Activated CD4-positive, alpha-beta T cell treated with anti-CD3 and anti-CD28 coated beads for 36 hours (primary cell): ENCODE measurements at regions of chr10 and their contacts with region 1.

Region 1: DNA sequence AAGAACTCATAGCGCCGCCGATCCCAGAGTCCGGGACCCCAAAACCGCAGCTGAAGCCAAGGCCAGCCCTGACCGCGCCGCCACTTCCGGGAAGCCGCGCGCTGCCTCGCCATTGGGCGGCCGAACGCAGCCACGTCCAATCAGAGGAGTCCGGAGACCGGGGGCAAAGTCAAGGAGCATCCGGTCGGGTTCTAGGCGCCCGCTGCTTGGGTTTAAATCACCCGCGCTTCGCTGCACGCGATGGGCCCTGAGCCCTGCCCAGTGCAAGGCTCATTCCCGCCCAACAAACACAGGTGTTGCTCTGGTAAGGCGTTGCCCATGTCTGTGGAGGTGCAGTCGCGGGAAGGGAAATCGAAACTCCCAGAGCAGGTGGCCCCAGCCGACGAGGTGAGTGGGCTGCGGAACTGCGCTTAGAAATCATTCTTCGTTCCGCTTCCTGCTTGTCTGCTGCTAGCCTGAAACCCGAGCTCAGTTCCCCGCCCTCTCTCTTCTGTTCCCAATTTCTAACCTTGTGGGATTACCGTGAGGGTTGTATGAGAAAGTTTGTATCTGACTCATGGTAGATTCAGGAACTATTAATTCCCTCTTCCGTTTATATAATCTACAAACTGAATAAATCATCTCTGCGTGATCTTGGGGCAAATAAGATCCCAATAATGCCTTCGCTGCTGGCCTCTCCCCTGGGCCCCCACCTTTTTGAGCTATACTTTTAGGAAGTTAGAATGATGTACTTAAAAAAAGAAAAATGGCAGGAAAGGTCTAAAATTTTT is at the start of gene DCLRE1C:
- DNase-seq: peak; percentile 94
- ATAC-seq: peak; percentile 94
- H3K4me3 Mint-ChIP-seq: peak within 1 kb of the TSS; percentile 90
- H3K27ac Mint-ChIP-seq: peak within 1 kb of the TSS; percentile 97
- H3K4me1 Mint-ChIP-seq: peaks cover 52% of the 10 kb centered on the region
- H3K27me3 Mint-ChIP-seq: no peaks in the 10 kb centered on the region
- total RNA-seq, gene DCLRE1C: 17.9 to 30.9 TPM

Region 2: DNA sequence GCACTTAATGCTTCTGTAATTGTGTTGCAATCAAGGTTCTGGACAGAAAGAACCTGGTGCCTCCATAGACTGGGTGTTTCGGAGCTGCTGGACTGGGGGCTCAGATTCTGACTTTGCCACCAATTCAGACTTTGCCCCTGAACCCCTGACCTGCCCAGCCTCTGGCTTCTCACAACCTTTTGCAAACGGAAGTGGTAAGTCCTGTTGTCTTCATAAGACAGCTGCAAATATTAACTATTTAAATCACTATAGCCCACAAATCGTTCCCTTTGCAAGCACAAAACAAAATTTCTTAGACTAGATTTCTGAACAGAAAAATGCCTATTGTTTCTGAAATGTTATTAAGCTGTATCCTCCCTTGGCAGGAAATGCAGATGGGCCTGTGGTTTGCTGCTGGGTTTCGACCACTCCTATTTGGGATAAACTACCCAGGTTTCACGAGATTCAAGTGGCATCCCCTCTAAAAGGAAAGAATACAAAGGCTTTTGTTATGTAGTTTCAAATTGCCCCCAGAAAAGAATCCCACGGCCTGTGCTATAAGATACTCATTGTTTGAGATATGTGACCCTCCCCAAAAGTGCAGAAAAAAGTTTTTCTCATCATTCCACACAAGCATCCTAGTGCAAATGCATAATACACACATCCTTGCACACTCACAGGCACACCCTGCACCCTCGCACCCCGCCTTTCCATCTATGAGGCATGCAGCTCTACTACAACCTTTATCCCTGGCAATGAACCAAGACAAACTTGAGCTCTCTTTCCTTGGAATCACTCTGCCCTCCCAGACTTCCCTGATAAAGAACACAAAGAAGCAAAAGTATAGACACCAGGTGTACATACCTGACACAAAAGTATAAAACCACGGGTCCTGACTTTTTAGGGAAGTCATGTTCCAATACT is 1158.3 kb before region 1 on chr10:
- CTCF ChIA-PET with region 1: no interaction called
- POLR2A ChIA-PET with region 1: no interaction called
- intact Hi-C with region 1: loop called in 1 of 2 experiments (anchors 5 kb)
- DNase-seq: no peak
- ATAC-seq: no peak
- H3K4me3 Mint-ChIP-seq: no peak overlapping the region
- H3K27ac Mint-ChIP-seq: no peak overlapping the region
- H3K4me1 Mint-ChIP-seq: peaks cover 26% of the 10 kb centered on the region
- H3K27me3 Mint-ChIP-seq: no peaks in the 10 kb centered on the region